ENCODE measurements at regions of chr4 and their contacts with region 1.

Region 1: GRCh38 chr4:165425629-165426028 is 46.8 kb downstream of the CPE start:
- DNase-seq: no peak
- ATAC-seq: no peak
- H3K4me3 ChIP-seq: no peak overlapping the region
- H3K27ac ChIP-seq: no peak overlapping the region
- H3K4me1 ChIP-seq: no peaks in the 10 kb centered on the region
- H3K27me3 ChIP-seq: no peaks in the 10 kb centered on the region
- CTCF ChIP-seq: no peak; the same call in 1 of the 2 replicates

Region 2: DNA sequence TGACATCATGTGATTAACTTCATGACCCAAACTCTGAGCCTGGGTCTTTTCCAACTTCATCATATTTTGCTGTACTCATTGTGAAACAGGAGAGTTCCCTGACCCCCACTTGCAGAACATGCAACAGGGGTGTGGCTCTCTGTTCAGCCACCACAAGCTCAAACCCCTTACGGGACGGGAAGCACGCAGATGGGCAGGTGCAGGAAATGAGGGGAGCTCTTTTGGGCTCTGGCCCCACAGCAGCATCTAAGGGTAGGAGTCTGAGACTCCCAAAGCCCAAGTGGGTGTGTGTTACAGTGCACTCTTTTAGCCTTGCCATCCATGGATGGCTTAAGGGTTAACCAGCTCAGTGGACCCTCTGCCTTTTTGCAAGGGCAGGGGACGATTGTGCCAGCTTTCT is 1271.2 kb before region 1 on chr4:
- CTCF ChIA-PET with region 1: no interaction called
- POLR2A ChIA-PET with region 1: interaction called, 12 read pairs
- in situ Hi-C with region 1: no loop called
- intact Hi-C with region 1: no loop called
- DNase-seq: no peak
- ATAC-seq: no peak
- H3K4me3 ChIP-seq: no peak overlapping the region
- H3K27ac ChIP-seq: no peak overlapping the region
- H3K4me1 ChIP-seq: no peaks in the 10 kb centered on the region
- H3K27me3 ChIP-seq: no peaks in the 10 kb centered on the region
- CTCF ChIP-seq: no peak

Measured in Panc1 (cell line).